ENCODE measurements at regions of chr20 and their contacts with region 1.

Region 1: GRCh38 chr20:63290677-63291472 is 2.1 kb upstream of the COL20A1 start:
- DNase-seq: peak; percentile 31
- H3K4me3 ChIP-seq: no peak overlapping the region
- H3K27ac ChIP-seq: no peak overlapping the region
- H3K4me1 ChIP-seq: peaks cover 5% of the 10 kb centered on the region
- H3K27me3 ChIP-seq: peaks cover 10% of the 10 kb centered on the region
- CTCF ChIP-seq: peak; percentile 58 to 61

Region 2: GRCh38 chr20:62485062-62485700 is 805.7 kb before region 1 on chr20:
- CTCF ChIA-PET with region 1: no interaction called
- dilution Hi-C with region 1: no loop called
- in situ Hi-C with region 1: no loop called
- intact Hi-C with region 1: no loop called
- DNase-seq: no peak
- H3K4me3 ChIP-seq: no peak overlapping the region
- H3K27ac ChIP-seq: no peak overlapping the region
- H3K4me1 ChIP-seq: peaks cover 14% of the 10 kb centered on the region
- H3K27me3 ChIP-seq: peaks cover 10% of the 10 kb centered on the region
- CTCF ChIP-seq: no peak

Region 3: GRCh38 chr20:63178889-63179686 is 111.8 kb before region 1 on chr20:
- CTCF ChIA-PET with region 1: no interaction called
- dilution Hi-C with region 1: no loop called
- in situ Hi-C with region 1: no loop called
- intact Hi-C with region 1: loop called (anchors 5 kb)
- DNase-seq: no peak
- H3K4me3 ChIP-seq: no peak overlapping the region
- H3K27ac ChIP-seq: no peak overlapping the region
- H3K4me1 ChIP-seq: peaks cover 7% of the 10 kb centered on the region
- H3K27me3 ChIP-seq: peaks cover 46% of the 10 kb centered on the region
- CTCF ChIP-seq: peak in 1 of 2 donors; percentile 63

Region 4: DNA sequence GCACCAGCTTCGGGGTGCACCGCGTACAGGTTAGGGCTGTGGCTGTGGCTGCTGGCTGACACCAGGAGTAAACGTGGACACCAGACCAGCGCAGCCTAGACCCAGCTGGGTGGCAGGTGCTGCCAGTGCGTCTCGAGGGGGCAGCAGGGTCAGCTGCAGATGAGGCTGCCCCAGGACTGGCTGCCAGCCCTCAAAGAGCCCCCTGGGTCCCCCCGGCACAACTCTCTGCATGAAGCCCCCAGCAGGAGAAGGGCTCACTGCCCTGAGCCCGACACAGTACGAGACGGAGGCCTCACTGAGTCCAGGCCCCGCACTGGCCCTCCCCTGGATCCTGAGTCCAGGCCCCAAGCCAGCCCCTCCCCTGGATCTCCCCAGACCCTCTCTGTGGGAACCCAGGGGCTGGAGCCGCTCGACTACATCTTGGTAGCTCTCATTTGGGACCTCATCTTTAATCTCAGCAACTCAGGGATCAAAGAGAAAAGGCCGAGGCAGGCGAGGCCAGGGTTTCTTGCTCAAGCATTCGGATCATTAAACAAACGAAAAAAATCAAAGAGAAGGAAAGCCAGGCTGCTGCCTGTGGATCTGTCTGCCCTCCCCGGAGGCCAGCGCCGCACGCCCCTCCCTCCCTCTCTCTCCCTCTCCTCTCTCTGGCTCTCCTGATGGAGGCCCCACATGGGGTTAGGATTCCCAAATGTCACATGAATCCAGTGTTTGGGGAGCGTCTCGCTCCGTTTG is 29.6 kb before region 1 on chr20:
- CTCF ChIA-PET with region 1: no interaction called
- dilution Hi-C with region 1: loop called (anchors 5 kb)
- in situ Hi-C with region 1: no loop called
- intact Hi-C with region 1: no loop called
- DNase-seq: no peak
- H3K4me3 ChIP-seq: no peak overlapping the region
- H3K27ac ChIP-seq: no peak overlapping the region
- H3K4me1 ChIP-seq: peaks cover 7% of the 10 kb centered on the region
- H3K27me3 ChIP-seq: peaks cover 3% of the 10 kb centered on the region
- CTCF ChIP-seq: no peak

Region 5: DNA sequence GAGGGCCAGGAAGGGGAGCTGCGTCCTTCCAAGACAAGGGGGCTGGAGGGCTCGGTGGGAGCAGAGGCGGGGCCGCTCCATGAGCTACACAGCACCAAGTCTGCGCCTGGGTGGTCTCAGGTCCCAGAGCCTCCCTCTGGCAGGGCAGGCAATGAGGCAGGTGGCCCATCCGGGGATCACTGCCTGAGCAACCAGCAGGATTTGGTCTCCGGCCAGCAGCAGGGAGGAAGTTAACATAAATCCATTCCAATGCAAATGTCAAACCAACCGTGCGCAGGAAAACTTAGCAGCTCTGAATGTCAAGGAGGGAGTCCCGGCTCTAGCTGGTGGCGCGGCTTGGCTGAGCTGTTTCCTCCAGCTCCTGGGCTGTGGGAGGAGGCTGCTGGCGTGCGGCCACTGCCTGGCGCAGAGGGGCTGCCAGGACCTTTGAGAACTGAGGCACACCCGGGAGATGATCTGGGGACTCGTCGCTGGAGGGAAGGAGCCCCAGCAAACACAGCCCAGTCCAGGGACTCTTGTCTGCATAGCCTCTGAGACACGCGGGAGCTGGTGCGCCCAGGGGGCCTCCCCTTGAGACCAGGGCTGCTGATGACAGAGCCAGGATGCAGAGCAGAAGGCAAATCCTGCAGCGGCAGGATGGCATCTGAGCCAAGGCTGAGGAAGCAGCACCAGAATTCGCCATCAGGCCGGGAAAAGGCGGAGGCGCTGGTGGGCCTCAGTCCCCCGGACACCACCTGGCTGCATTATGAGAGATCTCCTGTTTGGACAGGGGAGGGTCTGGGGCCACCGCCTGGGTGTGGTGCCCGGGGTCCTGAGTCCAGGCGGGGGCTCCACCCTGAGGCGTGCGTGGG is 103.4 kb after region 1 on chr20:
- CTCF ChIA-PET with region 1: no interaction called
- dilution Hi-C with region 1: loop called (anchors 5 kb)
- in situ Hi-C with region 1: no loop called
- intact Hi-C with region 1: no loop called
- DNase-seq: no peak
- H3K4me3 ChIP-seq: no peak overlapping the region
- H3K27ac ChIP-seq: no peak overlapping the region
- H3K4me1 ChIP-seq: no peaks in the 10 kb centered on the region
- H3K27me3 ChIP-seq: peaks cover 4% of the 10 kb centered on the region
- CTCF ChIP-seq: no peak

Region 6: GRCh38 chr20:63612276-63612928 is 321.5 kb after region 1 on chr20:
- CTCF ChIA-PET with region 1: no interaction called
- dilution Hi-C with region 1: loop called (anchors 5 kb)
- in situ Hi-C with region 1: no loop called
- intact Hi-C with region 1: no loop called
- DNase-seq: no peak
- H3K4me3 ChIP-seq: no peak overlapping the region
- H3K27ac ChIP-seq: no peak overlapping the region
- H3K4me1 ChIP-seq: no peaks in the 10 kb centered on the region
- H3K27me3 ChIP-seq: no peaks in the 10 kb centered on the region
- CTCF ChIP-seq: no peak